Activated naive CD4-positive, alpha-beta T cell treated with anti-CD3 and anti-CD28 coated beads for 36 hours (primary cell): ENCODE measurements at regions of chr5 and their contacts with region 1.

Region 1: DNA sequence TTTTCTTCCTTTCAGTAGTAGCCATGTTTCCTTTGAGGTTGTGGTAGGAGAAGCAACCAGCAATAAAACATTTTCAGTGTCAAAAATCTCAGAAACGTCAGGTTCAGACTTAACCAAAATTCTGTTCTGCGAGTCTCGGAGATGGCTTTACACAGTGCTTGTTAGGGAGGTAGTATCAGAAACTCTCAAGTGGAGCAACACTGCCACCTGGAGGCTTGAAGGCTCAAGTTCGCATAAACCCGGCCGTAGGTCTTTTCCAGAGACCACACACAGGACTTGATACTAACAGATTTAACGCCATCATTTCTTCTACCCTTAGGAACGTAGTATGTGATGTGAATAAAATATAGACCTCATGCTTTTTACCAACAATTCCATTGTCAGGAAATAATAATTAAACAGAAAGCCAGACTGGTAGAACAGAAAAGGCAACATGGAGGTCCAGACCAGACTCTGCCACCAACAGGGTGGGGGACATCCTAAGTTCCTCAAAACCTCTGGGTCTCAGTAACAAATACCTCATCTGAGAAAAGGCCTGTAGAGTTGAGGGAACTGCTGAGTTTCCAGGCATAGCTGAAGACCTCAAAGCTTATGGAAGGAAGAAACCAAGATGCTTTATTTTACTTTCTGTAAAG is 8.5 kb downstream of the PTGER4 start:
- DNase-seq: peak; percentile 95
- H3K4me3 Mint-ChIP-seq: peak overlapping the region; percentile 89
- H3K27ac Mint-ChIP-seq: peak overlapping the region; percentile 99
- H3K4me1 Mint-ChIP-seq: peaks cover 64% of the 10 kb centered on the region
- H3K27me3 Mint-ChIP-seq: no peaks in the 10 kb centered on the region

Region 2: GRCh38 chr5:40021007-40021406 is 667.2 kb before region 1 on chr5:
- CTCF ChIA-PET with region 1: no interaction called
- intact Hi-C with region 1: loop called (anchors 1 kb)
- DNase-seq: no peak
- H3K4me3 Mint-ChIP-seq: no peak overlapping the region
- H3K27ac Mint-ChIP-seq: no peak overlapping the region
- H3K4me1 Mint-ChIP-seq: no peaks in the 10 kb centered on the region
- H3K27me3 Mint-ChIP-seq: peaks cover 10% of the 10 kb centered on the region

Region 3: GRCh38 chr5:40223884-40224402 is 464.3 kb before region 1 on chr5:
- CTCF ChIA-PET with region 1: no interaction called
- intact Hi-C with region 1: loop called (anchors 1 kb)
- DNase-seq: peak; percentile 66
- H3K4me3 Mint-ChIP-seq: peak overlapping the region; percentile 31
- H3K27ac Mint-ChIP-seq: peak overlapping the region; percentile 92
- H3K4me1 Mint-ChIP-seq: peaks cover 50% of the 10 kb centered on the region
- H3K27me3 Mint-ChIP-seq: no peaks in the 10 kb centered on the region

Region 4: GRCh38 chr5:40410231-40410861 is 277.9 kb before region 1 on chr5:
- CTCF ChIA-PET with region 1: interaction called, 5 read pairs
- intact Hi-C with region 1: loop called (anchors 1 kb)
- DNase-seq: peak; percentile 88
- H3K4me3 Mint-ChIP-seq: peak overlapping the region; percentile 58
- H3K27ac Mint-ChIP-seq: peak overlapping the region; percentile 98
- H3K4me1 Mint-ChIP-seq: peaks cover 64% of the 10 kb centered on the region
- H3K27me3 Mint-ChIP-seq: no peaks in the 10 kb centered on the region

Region 5: DNA sequence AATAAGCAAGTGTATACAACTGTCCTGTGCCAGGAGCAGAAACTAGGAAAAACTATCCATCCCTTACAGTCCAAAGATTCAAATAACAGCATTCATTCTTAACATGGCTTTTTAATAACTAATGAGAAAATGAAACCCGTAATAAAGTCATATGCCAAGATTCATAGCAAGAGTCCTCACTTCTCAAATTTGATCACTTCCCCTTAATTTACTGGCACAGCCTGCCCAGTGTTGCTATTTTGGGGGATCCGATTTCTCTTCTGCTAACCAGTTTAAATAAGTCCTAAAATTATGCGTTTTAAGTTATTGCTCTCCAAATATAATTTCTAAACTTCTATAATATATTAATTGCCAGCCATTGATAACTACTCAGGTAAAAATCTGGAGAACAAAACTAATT is 185.5 kb before region 1 on chr5:
- CTCF ChIA-PET with region 1: interaction called, 8 read pairs
- intact Hi-C with region 1: loop called (anchors 1 kb)
- DNase-seq: no peak
- H3K4me3 Mint-ChIP-seq: no peak overlapping the region
- H3K27ac Mint-ChIP-seq: no peak overlapping the region
- H3K4me1 Mint-ChIP-seq: peaks cover 24% of the 10 kb centered on the region
- H3K27me3 Mint-ChIP-seq: no peaks in the 10 kb centered on the region

Region 6: GRCh38 chr5:40736103-40736875 is 48.0 kb after region 1 on chr5:
- CTCF ChIA-PET with region 1: interaction called, 3 read pairs
- intact Hi-C with region 1: loop called (anchors 1 kb)
- DNase-seq: no peak
- H3K4me3 Mint-ChIP-seq: no peak overlapping the region
- H3K27ac Mint-ChIP-seq: no peak overlapping the region
- H3K4me1 Mint-ChIP-seq: peaks cover 26% of the 10 kb centered on the region
- H3K27me3 Mint-ChIP-seq: no peaks in the 10 kb centered on the region

Region 7: GRCh38 chr5:40879163-40879942 is 191.1 kb after region 1 on chr5:
- CTCF ChIA-PET with region 1: no interaction called
- intact Hi-C with region 1: loop called (anchors 5 kb)
- DNase-seq: no peak
- H3K4me3 Mint-ChIP-seq: no peak overlapping the region
- H3K27ac Mint-ChIP-seq: no peak overlapping the region
- H3K4me1 Mint-ChIP-seq: peaks cover 4% of the 10 kb centered on the region
- H3K27me3 Mint-ChIP-seq: no peaks in the 10 kb centered on the region